ENCODE measurements at regions of chr9 and their contacts with region 1.

Region 1: DNA sequence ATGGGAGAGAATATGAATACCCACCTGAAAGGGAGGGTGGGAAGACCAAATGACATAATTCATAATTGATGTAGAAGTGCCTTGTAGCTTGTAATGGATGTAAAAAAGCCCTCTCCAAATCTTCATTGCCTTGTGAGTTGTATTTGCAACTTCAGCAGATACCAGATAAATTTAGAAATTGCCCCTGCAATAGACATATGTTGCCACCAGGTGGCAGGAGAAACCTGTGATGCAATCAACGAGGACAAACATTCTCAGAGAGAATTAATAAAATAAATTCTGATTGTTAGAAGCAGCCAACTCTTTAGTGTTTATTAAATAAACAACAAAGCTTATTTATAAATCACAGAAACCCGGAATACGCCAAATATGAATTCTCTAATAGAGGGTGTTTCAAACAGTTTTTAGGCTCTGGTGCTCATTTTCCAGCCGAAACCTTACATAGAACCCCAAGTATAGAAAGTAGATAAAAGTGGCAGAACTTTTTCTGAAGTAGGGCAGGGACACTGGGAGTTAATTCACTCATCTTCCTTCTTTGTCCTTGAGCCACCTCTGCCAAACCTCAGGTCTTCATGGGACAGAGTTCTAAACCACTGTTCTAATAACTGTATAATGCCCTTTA is 147.8 kb downstream of the TMEM38B start:
- DNase-seq: peak; percentile 73
- ATAC-seq: no peak
- H3K4me3 ChIP-seq: no peak overlapping the region
- H3K27ac ChIP-seq: no peak overlapping the region
- H3K4me1 ChIP-seq: no peaks in the 10 kb centered on the region
- H3K27me3 ChIP-seq: no peaks in the 10 kb centered on the region
- CTCF ChIP-seq: peak; percentile 84

Region 2: GRCh38 chr9:105712773-105713172 is 129.4 kb before region 1 on chr9:
- CTCF ChIA-PET with region 1: no interaction called
- POLR2A ChIA-PET with region 1: no interaction called
- intact Hi-C with region 1: no loop called
- DNase-seq: no peak
- ATAC-seq: no peak
- H3K4me3 ChIP-seq: no peak overlapping the region
- H3K27ac ChIP-seq: no peak overlapping the region
- H3K4me1 ChIP-seq: no peaks in the 10 kb centered on the region
- H3K27me3 ChIP-seq: no peaks in the 10 kb centered on the region
- CTCF ChIP-seq: no peak

Region 3: DNA sequence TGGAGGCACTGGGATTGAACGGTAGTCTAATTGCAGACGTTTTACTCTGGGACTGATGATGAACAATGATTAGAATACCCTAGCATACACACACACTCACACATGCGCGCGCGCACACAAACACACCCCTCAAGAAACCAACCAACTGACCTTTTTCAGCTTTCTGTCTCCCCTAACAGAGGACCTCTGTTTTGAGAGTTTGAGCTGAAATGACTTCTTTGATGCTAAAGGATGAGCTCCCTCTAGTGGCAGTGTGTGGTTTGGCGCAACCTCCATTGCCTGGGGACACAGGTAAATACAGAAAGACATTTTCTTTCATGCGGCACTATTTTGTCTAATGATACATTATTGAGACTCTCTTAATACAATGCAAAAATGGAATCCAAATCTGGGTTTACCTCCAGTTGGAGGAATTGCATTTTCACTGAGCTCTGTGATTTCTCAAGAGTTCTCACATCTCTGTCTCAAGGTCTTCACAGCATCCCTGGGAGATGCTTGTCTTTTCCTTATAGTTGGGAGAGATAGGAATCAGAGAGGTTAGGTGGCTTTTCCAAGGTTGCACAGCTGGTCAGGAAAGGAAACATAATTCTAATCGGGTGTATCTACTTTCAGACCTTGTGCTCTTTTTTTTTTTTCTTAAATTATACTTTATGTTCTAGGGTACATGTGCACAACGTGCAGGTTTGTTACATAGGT is 39.7 kb after region 1 on chr9:
- CTCF ChIA-PET with region 1: interaction called, 3 read pairs
- POLR2A ChIA-PET with region 1: no interaction called
- intact Hi-C with region 1: loop called (anchors 1 kb)
- DNase-seq: peak; percentile 79
- ATAC-seq: peak; percentile 59; the same call in 1 of the 2 replicates
- H3K4me3 ChIP-seq: no peak overlapping the region
- H3K27ac ChIP-seq: no peak overlapping the region
- H3K4me1 ChIP-seq: no peaks in the 10 kb centered on the region
- H3K27me3 ChIP-seq: no peaks in the 10 kb centered on the region
- CTCF ChIP-seq: peak; percentile 83